Esophagus muscularis mucosa (tissue), 4 donors: ENCODE measurements at regions of chr15 and their contacts with region 1.

Region 1: DNA sequence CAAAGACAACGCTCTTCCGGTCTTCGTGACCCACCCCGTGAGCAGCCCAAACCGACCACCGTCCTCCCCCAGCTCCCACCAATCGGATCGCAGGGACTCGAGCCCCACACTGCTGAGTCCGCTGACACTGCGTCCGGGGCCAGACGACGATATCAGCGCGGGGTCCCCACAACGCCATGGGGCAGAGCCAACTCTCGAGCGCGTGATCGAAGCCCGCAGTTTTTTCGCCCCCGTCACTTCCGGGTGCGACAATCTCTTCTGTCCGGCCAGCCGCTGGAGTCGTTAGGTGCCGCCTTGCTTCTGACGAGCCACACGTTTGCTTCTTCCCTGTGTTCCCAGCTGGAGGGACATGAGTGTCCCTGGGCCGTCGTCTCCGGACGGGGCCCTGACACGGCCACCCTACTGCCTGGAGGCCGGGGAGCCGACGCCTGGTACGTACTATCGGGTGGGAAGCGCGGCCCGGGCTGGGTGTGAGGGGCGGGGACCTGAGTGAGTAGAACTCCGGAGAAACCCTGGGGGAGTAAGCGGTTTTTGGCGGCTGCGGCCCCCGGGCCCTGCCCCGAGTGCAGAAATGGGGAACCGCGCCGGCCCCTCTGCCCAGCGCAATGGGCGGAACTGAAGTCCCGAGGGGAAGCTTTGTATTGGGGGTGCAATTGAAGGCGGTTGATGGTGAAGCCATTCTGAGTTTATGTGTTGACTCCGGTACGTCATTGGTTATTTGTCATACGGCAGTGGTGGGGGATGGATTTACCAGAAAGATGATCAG is at the start of gene BLOC1S6:
- DNase-seq: peak; percentile 99
- H3K4me3 ChIP-seq: peak within 1 kb of the TSS; percentile 70 to 96 (median 88)
- H3K27ac ChIP-seq: peak within 1 kb of the TSS; percentile 93 to 99 (median 98)
- H3K4me1 ChIP-seq: peaks cover 27 to 60% (median 56%) of the 10 kb centered on the region in 4 donors
- H3K27me3 ChIP-seq: no peaks in the 10 kb centered on the region
- CTCF ChIP-seq: no peak
- EP300 ChIP-seq: no peak
- POLR2A ChIP-seq: no peak
- total RNA-seq, gene BLOC1S6: 37.5 to 58.1 (median 49.2) TPM

Region 2: DNA sequence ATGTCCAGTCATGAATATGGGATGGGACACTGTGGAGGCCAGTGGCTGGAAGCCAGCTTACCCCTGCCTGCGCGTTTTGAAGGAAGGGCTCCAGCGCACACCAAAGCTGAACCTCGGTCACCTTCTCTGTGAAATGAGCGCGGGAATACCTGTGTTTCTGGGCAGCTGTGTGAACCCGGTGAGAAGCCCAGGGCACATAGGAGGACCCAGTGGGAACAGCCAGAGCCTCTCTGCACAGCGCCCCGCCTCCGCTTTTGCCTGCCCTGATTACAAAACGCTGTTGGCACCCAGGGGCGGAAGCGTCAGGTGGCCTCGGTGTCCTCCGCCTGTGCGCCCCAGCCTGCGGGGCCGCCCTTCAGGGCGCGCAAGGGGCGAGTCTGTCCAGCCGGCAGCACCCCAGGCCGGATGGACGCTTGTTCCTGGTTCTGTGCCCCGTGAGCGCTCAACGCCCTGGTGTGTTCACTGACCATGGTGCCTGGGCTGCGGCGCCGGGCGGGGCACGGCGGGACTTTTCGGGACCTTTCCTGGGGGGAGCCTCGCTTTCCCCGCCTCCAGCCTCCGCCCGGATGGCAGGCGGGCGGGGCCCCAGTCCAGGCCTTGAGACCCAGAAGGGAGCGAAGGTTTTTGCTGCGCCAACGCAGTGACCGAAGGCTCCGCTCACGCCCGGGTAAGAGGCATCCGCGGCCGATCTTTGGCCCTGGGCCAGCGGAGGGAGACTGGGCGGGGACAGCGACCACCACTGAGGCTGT is 47.3 kb after region 1 on chr15 and contains the start of gene SQOR:
- intact Hi-C with region 1: loop called (anchors 10 kb)
- DNase-seq: peak; percentile 96
- H3K4me3 ChIP-seq: peak within 1 kb of the TSS; percentile 72 to 97 (median 78)
- H3K27ac ChIP-seq: peak within 1 kb of the TSS; percentile 89 to 97 (median 92)
- H3K4me1 ChIP-seq: peaks cover 28 to 53% (median 47%) of the 10 kb centered on the region in 4 donors
- H3K27me3 ChIP-seq: no peaks in the 10 kb centered on the region
- CTCF ChIP-seq: no peak
- EP300 ChIP-seq: no peak
- POLR2A ChIP-seq: peak; percentile 66
- total RNA-seq, gene SQOR: 49.8 to 80.4 (median 67.8) TPM